MCF 10A (cell line): ENCODE measurements at regions of chr2 and their contacts with region 1.

Region 1: GRCh38 chr2:71190656-71191569 is 36.0 kb downstream of the PAIP2B start:
- DNase-seq: peak; percentile 43
- H3K4me3 Mint-ChIP-seq: no peak overlapping the region
- H3K27ac Mint-ChIP-seq: no peak overlapping the region
- H3K4me1 Mint-ChIP-seq: no peaks in the 10 kb centered on the region
- H3K27me3 Mint-ChIP-seq: no peaks in the 10 kb centered on the region
- CTCF ChIP-seq: peak; percentile 41

Region 2: DNA sequence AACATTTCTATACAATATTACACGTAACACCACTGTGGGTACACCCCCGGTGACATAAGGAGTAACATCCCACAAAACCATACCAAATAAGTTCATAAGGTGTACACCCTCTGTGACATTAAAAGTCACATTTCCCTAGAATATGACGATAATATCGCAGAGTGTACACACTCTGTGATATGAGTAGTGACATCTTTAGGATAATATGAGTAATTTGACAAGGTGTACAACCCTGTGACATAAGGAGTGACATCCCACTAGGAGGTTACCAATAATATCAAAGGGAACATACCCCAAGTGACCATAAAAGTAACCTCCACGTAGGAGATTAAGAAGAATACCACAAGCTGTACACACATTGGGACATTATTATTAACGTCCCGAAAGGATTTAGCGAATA is 172.3 kb before region 1 on chr2:
- CTCF ChIA-PET with region 1: no interaction called
- POLR2A ChIA-PET with region 1: no interaction called
- intact Hi-C with region 1: loop called (anchors 1 kb)
- DNase-seq: no peak
- H3K4me3 Mint-ChIP-seq: no peak overlapping the region
- H3K27ac Mint-ChIP-seq: no peak overlapping the region
- H3K4me1 Mint-ChIP-seq: peaks cover 6% of the 10 kb centered on the region
- H3K27me3 Mint-ChIP-seq: no peaks in the 10 kb centered on the region
- CTCF ChIP-seq: no peak

Region 3: GRCh38 chr2:71216502-71216901 is 25.6 kb after region 1 on chr2:
- CTCF ChIA-PET with region 1: no interaction called
- POLR2A ChIA-PET with region 1: no interaction called
- intact Hi-C with region 1: no loop called
- DNase-seq: peak; percentile 87
- H3K4me3 Mint-ChIP-seq: no peak overlapping the region
- H3K27ac Mint-ChIP-seq: peak overlapping the region; percentile 27
- H3K4me1 Mint-ChIP-seq: peaks cover 16% of the 10 kb centered on the region
- H3K27me3 Mint-ChIP-seq: no peaks in the 10 kb centered on the region
- CTCF ChIP-seq: no peak